B cell (primary cell): ENCODE measurements at regions of chr20 and their contacts with region 1.

Region 1: GRCh38 chr20:47370850-47371676 is 14.6 kb upstream of the ZMYND8 start:
- DNase-seq: no peak
- ATAC-seq: no peak
- H3K4me3 ChIP-seq: no peak overlapping the region
- H3K4me3 Mint-ChIP-seq: no peak overlapping the region
- H3K27ac ChIP-seq: no peak overlapping the region
- H3K27ac Mint-ChIP-seq: no peak overlapping the region
- H3K4me1 ChIP-seq: no peaks in the 10 kb centered on the region
- H3K4me1 Mint-ChIP-seq: no peaks in the 10 kb centered on the region
- H3K27me3 ChIP-seq: no peaks in the 10 kb centered on the region
- H3K27me3 Mint-ChIP-seq: no peaks in the 10 kb centered on the region
- CTCF ChIP-seq: no peak

Region 2: DNA sequence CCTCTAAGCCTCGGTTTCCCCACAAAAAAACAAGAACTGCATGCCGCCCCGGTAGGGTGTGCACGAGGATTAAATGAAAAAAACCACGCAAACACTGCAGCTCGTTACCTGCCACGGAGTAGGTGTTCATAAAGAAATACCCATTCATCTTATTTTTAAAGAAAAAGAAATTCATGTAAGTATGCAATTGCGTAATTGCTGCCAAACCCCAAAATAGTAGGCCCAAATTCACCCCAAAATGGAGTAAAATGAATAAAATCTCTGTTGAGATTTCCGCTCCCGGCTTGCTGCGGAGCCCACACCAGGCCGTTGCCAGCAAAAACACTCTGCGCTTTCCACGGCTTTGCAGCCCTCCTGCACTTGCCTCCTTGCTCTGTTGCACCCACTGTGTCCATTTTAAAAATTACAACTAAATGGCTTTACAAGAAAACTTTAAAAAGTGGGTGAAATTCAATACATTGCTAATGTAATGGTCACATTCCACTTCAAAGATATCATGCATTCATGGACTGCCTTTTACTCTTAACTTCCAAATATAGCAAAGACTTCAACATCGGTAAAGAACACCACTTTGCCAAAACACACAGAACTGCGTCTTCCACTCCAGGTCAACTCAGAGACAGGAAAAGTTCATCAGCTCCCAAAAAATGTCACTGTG is 139.6 kb before region 1 on chr20:
- CTCF ChIA-PET with region 1: no interaction called
- POLR2A ChIA-PET with region 1: no interaction called
- intact Hi-C with region 1: no loop called
- DNase-seq: no peak
- ATAC-seq: no peak
- H3K4me3 ChIP-seq: no peak overlapping the region
- H3K4me3 Mint-ChIP-seq: no peak overlapping the region
- H3K27ac ChIP-seq: no peak overlapping the region
- H3K27ac Mint-ChIP-seq: peak overlapping the region; percentile 26
- H3K4me1 ChIP-seq: no peaks in the 10 kb centered on the region
- H3K4me1 Mint-ChIP-seq: no peaks in the 10 kb centered on the region
- H3K27me3 ChIP-seq: no peaks in the 10 kb centered on the region
- H3K27me3 Mint-ChIP-seq: no peaks in the 10 kb centered on the region
- CTCF ChIP-seq: no peak

Region 3: DNA sequence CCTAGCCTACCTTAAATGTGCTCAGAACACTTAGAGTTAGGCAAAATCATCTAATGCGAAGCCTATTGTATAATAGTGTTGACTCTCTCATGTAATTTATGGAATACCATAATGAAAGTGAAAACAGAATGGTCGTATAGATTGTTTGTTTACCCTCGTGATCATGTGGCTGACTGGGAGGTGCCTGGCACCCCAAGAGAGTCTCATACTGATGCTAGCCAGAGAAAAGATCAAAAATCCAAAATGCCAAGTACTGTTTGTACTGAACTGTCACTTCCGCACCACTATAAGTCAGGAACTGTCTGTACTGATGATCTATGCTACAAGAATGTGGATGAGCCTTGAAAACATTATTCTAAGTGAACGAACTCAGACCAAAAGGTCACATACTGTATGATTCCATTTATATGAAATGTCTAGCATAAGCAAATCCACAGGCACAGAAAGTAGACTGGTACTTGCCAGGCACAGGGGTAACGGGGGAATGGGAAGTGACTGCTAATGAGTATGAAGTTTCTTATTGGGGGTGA is 37.0 kb before region 1 on chr20:
- CTCF ChIA-PET with region 1: no interaction called
- POLR2A ChIA-PET with region 1: interaction called, 4 read pairs
- intact Hi-C with region 1: loop called (anchors 5 kb)
- DNase-seq: no peak
- ATAC-seq: no peak
- H3K4me3 ChIP-seq: no peak overlapping the region
- H3K4me3 Mint-ChIP-seq: peak overlapping the region; percentile 66
- H3K27ac ChIP-seq: peak overlapping the region in 1 of 2 donors; percentile 3
- H3K27ac Mint-ChIP-seq: peak overlapping the region; percentile 73
- H3K4me1 ChIP-seq: peaks cover 4 to 18% of the 10 kb centered on the region in 2 donors
- H3K4me1 Mint-ChIP-seq: peaks cover 44% of the 10 kb centered on the region
- H3K27me3 ChIP-seq: no peaks in the 10 kb centered on the region
- H3K27me3 Mint-ChIP-seq: no peaks in the 10 kb centered on the region
- CTCF ChIP-seq: no peak

Region 4: DNA sequence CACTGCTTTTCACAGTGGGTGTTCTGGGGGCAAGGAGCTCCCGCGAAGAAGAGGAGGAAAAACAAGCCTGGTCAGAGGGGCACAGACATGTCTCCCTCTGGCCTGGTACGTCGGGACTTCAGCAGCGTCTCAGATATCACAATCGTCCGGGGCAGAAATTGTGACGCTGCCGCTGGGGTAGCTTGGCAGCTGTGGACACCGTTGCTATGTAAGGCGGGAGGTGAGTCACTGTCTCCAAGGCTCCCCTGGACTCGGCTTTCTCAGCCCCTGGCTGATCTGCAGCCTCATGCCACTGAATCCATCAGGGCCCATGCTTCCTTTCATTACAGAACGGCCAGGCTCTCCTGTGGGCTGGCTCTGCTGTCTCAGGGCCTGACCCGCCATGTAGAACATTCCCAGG is 315.5 kb after region 1 on chr20:
- CTCF ChIA-PET with region 1: no interaction called
- POLR2A ChIA-PET with region 1: no interaction called
- intact Hi-C with region 1: no loop called
- DNase-seq: no peak
- ATAC-seq: no peak
- H3K4me3 ChIP-seq: no peak overlapping the region
- H3K4me3 Mint-ChIP-seq: no peak overlapping the region
- H3K27ac ChIP-seq: no peak overlapping the region
- H3K27ac Mint-ChIP-seq: no peak overlapping the region
- H3K4me1 ChIP-seq: no peaks in the 10 kb centered on the region
- H3K4me1 Mint-ChIP-seq: no peaks in the 10 kb centered on the region
- H3K27me3 ChIP-seq: no peaks in the 10 kb centered on the region
- H3K27me3 Mint-ChIP-seq: peaks cover 4% of the 10 kb centered on the region
- CTCF ChIP-seq: no peak